ENCODE measurements at regions of chr14 and their contacts with region 1.

Region 1: DNA sequence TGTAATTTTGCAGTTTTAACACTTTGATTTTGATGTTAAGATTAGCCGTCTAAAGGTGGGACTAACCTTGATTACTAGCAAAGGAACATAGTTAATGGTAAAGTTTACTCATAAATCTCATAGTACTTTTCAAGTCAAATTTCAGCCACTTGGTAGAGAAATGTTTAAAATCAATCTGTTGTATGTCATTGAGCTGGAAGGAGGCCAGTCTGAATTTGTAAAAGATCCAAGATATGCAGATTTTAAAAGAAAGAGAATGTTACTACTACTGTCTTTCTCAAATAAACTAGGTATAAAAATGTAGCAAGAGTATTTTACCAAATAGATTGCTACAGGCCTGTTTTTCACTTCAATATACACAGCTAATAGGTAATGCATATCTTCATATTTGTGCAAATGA is 600.8 kb upstream of the SEL1L start:
- DNase-seq: no peak
- H3K4me3 ChIP-seq: no peak overlapping the region
- CTCF ChIP-seq: no peak
- POLR2A ChIP-seq: no peak

Region 2: DNA sequence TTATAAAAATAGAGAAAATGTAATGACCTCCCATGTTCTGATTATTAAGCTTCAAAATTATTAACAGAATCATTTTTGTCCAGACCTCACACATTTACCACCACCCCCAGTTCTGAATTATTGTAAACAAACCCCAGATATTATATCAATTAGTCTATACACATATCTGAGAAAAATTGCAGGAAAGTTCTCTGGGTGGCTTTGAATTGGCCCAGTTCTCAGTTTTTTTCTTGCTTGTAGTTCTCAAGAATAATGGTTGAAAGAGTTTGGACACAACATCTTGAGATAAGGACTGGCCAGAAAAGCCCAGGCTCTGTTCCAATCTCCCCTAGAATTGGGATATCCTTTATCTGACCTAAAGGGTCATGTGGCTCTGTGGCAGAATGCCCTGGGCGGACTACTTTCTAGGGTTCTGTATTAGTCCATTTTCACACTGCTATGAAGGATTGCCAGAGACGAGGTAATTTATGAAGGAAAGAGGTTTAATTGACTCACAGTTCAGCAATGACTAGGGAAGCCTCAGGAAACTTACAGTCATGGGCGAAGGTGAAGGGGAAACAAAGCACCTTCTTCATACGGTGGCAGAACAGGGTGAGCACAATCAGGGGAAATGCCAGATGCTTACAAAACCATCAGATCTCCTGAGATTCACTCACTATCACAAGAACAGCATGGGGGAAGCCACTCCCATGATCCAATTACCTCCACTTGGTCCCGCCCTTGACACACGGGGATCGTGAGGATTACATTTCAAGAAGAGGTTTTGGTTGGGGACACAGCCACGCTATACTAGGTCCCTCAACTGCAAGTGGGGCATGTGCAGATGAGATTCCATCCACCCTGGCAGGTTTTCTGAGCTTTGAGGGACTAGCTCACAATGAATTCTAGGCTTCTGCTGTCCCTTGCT is 1890.9 kb after region 1 on chr14:
- intact Hi-C with region 1: loop called (anchors 5 kb)
- DNase-seq: no peak
- H3K4me3 ChIP-seq: no peak overlapping the region
- CTCF ChIP-seq: no peak
- POLR2A ChIP-seq: no peak